Activated CD4-positive, alpha-beta memory T cell treated with anti-CD3 and anti-CD28 coated beads for 36 hours (primary cell): ENCODE measurements at regions of chr10 and their contacts with region 1.

Region 1: DNA sequence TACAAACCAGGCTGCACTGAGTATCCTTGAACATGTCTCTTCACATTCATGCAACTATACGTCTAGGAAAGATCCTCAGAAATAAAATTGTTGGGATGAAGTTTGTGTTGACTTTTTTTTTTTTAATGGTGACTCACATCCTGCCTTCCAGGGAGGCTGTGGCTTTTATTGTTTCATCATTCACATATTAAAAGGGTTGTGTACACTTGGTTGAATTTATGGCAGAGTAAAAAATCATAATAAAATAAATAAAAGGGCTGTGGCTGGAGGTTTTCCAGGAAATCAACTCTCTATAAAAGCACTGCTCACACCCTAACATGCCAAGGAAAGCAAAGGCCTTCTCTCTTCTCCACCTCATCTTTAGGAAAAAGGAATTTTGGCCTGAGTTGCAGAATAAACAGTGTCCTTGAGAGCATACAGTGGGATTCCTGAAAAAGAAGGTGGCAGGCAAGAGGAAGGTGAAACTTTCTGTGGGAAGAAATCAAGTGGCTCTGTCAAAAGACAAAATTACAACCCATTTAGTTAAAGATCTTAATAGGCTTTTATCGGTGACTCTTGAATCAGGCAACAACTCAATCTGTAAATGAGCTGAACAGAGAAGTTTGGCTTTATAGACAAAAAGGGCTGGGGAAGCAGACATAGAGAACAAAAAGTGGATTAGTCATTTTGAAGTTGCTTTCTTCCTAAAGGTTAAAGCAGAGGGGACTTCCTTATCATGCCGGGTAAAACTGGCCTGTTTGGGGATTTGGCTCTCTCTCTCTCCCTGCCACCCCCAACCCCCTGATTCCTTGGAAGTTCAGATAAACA is 41.6 kb upstream of the FHIP2A start:
- DNase-seq: no peak
- H3K4me3 Mint-ChIP-seq: no peak overlapping the region
- H3K27ac Mint-ChIP-seq: no peak overlapping the region
- H3K4me1 Mint-ChIP-seq: peaks cover 7% of the 10 kb centered on the region
- H3K27me3 Mint-ChIP-seq: no peaks in the 10 kb centered on the region

Region 2: DNA sequence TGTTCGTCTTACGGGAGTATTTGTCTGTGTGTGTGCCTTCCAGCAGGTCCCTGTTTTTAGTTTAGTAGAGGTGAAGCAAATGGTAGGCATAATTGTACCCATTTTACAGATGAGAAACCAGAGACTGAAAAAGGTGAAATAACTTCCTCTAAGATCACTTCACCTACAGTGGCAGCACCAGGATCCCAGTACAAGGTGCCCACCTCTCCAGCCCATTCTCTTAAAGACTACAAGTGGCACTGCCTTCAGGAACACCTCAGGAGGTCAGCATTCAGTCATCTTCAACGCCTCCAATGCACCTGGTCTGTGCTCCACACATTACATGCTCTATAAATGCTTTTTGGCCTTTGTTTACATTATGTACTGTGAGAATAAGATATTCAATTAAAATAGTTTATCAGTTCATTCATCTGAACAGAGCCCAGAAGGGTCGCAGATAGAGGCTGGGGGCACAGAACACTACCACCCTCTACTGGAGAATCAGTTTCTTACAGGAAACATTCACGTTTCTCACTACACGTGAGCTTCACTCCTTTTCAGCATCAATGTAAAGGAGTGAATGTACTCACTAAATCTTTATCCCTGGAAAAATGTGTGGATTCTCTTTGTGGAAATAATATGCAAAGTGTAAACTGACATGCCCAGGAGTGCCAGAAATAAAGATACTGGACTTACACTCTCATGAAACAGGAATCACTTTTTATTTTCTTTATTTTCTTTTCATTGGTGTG is 76.5 kb before region 1 on chr10:
- CTCF ChIA-PET with region 1: no interaction called
- POLR2A ChIA-PET with region 1: no interaction called
- intact Hi-C with region 1: loop called (anchors 5 kb)
- DNase-seq: no peak
- H3K4me3 Mint-ChIP-seq: no peak overlapping the region
- H3K27ac Mint-ChIP-seq: no peak overlapping the region
- H3K4me1 Mint-ChIP-seq: no peaks in the 10 kb centered on the region
- H3K27me3 Mint-ChIP-seq: peaks cover 7% of the 10 kb centered on the region

Region 3: GRCh38 chr10:114801411-114801813 is 21.4 kb after region 1 on chr10:
- CTCF ChIA-PET with region 1: interaction called, 3 read pairs
- POLR2A ChIA-PET with region 1: no interaction called
- intact Hi-C with region 1: loop called (anchors 2 kb)
- DNase-seq: peak; percentile 42
- H3K4me3 Mint-ChIP-seq: no peak overlapping the region
- H3K27ac Mint-ChIP-seq: no peak overlapping the region
- H3K4me1 Mint-ChIP-seq: peaks cover 17% of the 10 kb centered on the region
- H3K27me3 Mint-ChIP-seq: no peaks in the 10 kb centered on the region